Head of caudate nucleus (tissue), 42 donors: ENCODE measurements at regions of chr12 and their contacts with region 1.

Region 1: DNA sequence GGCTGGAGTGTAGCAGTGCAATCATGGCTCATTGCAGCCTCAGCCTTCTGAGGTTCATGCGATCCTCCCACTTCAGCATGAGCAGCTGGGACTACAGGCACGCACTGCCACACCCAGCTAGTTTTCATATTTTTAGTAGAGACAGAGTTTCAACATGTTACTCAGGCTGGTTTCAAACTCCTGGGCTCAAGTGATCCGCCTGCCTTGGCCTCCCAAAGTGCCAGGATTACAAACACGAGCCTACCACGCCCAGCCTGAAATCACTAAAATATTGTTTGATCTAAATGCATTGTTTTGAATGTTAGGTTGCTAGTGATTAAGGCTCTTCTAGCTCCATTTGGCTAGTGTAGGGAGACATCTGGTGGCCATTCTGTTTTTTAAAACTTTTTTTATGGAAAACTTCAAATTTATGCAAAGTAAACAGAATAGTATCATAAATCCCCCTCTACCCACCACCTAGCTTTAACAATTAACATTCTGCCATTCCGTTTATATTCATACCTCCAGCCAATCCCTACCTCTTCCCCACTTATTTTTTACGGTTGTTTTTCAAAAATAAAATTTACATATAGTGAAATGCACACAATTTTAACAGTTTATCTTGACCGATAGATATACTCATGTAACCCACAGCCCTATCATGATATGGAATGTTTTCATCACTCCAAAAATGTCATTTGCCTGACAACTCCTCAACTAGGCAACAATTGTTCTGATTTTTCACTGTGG is 37.8 kb downstream of the MYO1H start:
- DNase-seq: peak in 25 of 42 donors; percentile 4 to 71 (median 30)

Region 2: DNA sequence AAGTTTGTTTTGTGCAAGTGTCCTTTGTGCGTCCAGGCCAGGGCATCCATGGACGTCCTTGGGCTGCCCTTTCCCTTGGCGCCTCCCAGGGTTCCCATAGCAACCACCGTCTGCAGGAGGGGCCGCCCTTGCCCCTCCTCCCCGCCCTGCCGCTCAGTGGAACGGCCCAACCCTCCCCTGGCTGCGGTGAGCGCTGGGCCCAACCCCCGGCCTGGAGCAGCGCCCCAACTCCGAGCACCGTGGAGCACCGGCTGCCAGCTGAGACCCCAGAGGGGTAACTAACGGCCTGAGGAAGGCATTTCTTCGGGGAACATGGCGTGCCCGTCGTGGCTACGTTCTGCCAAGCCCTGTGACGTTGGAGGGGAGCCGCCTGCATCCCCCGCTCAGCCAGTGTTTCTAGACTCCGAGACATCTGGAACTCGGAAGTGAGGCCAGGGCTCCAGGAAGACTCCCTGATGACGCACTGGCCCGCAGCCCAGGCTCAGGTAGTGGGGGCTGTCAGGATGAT is 274.5 kb before region 1 on chr12:
- intact Hi-C with region 1: loop called (anchors 10 kb)
- DNase-seq: peak; percentile 80 to 97 (median 91)

Region 3: DNA sequence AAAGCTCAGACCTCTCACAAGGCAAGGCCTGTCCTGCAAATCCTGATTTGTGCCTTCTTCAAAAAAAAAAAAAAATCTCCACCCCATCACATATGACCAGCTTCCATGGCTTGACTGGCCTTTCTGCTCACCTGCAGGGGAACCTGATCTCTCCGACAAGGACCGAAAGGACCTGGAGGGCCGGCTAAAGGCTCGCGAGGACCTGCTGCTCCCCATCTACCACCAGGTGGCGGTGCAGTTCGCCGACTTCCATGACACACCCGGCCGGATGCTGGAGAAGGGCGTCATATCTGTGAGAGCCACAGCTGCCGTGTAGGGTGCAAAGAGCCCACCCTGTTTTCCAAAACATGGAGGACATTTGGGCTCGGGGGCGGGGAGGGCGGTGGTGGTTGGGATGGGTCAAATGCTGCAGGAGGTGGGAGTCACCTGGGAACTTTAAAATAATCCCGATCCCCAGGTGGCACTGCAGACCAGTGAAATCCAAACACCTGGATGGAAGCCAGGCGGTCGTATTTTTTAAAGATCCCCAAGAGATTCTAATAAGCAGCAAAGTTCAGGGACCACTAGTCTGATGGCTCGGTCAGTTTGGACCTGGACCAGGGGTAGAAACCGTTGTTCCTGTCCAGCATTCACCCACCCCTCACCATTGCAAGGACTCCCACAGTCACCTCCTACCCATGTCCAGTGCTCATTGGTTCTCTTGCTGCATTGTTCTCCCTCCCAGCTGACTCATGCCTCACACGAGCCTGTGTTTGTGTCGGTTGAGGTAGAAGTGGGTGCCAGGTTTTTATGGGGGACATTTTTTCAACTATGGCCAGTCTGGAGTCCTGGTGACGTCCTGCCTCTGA is 121.2 kb before region 1 on chr12:
- intact Hi-C with region 1: loop called (anchors 5 kb)
- DNase-seq: peak; percentile 39 to 91 (median 74)